GM12878 (cell line): ENCODE measurements at regions of chr7 and their contacts with region 1.

Region 1: DNA sequence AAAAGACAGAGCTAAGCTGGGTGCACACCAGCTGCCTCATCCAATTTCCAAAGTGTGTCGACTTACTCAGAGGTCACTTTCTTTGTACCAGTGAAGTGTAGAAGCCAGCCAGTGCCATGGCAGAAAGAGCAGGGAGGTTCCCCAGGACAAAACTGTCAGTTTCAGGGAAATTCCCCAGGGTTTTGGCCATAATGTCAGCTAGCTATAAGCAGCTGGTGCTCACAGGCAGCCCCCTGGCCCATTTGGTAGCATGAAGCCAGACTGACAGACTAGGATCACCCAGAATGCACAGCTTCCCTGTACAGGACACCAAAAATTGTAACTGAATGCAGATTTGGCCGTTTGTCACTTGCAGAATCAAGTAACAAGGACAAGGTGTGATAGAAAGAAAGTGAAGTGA is 28.6 kb downstream of the MRPL32 start:
- DNase-seq: no peak
- ATAC-seq: peak; percentile 90
- H3K4me3 ChIP-seq: no peak overlapping the region
- H3K27ac ChIP-seq: no peak overlapping the region
- H3K4me1 ChIP-seq: no peaks in the 10 kb centered on the region
- H3K27me3 ChIP-seq: no peaks in the 10 kb centered on the region
- CTCF ChIP-seq: no peak
- EP300 ChIP-seq: no peak
- POLR2A ChIP-seq: no peak
- RAD21 ChIP-seq: no peak

Region 2: DNA sequence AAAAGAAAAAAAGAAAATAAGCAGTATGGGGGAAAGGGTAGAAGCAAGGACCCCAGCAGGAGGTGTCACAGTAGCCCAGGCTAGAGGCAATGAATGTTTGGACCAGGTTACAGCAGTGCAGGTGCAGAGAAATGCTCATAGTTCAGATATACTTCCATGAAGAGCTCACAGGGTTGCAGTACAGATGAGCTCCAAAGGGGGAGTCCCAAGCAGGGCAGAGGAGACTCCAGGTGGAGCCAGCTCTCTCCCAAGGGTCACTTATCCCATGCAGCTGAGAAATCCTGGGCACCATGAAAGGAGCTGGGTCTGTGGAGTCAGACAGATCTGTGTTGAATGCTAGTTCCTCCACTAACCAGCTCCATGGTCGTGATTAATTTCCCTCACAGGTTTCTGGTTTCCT is 223.8 kb before region 1 on chr7:
- CTCF ChIA-PET with region 1: no interaction called
- POLR2A ChIA-PET with region 1: no interaction called
- RAD21 ChIA-PET with region 1: no interaction called
- SMC1A ChIA-PET with region 1: no interaction called
- in situ Hi-C with region 1: no loop called
- intact Hi-C with region 1: no loop called
- DNase-seq: no peak
- ATAC-seq: no peak
- H3K4me3 ChIP-seq: no peak overlapping the region
- H3K27ac ChIP-seq: no peak overlapping the region
- H3K4me1 ChIP-seq: no peaks in the 10 kb centered on the region
- H3K27me3 ChIP-seq: no peaks in the 10 kb centered on the region
- CTCF ChIP-seq: no peak
- EP300 ChIP-seq: no peak
- POLR2A ChIP-seq: no peak
- RAD21 ChIP-seq: no peak

Region 3: DNA sequence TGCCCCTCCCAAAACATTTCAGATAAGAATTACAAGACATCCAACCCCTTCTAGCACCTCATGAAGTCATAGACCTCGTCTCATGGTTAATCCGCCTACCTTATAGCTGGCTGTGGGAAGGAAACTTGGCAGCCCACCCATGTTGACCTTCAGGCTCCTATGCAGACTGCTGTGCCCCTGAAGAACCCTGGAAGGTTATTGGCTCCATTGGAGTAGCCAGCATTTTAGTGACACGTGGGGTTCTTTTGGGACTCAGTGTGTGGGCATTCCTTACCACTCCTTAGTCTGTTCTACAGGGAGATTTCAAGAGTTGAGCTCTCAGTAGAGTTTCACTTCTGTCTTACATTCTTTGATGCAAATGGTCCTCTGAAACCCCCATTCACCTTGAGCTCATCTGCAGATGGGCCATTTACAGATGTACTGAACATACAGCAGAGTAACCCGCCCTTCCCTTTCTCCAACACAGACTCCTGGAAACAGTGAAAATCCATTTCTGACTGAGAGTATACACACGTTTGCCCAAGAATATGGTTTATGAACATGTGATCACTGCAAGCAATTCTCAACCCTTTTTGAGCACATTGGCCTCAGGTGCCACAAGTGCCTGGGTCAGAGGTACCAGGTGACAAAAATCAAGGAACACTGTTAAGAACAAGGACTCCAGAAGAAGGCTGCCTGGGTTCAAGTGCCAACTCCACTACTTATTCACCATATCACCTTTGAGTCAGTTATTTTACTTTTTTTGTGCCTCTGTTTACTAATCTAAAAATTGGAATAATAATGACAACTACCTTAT is 97.7 kb after region 1 on chr7:
- CTCF ChIA-PET with region 1: interaction called, 4 read pairs
- POLR2A ChIA-PET with region 1: no interaction called
- RAD21 ChIA-PET with region 1: interaction called, 15 read pairs
- SMC1A ChIA-PET with region 1: interaction called, 23 read pairs
- in situ Hi-C with region 1: no loop called
- intact Hi-C with region 1: no loop called
- DNase-seq: peak; percentile 53
- ATAC-seq: peak; percentile 61
- H3K4me3 ChIP-seq: no peak overlapping the region
- H3K27ac ChIP-seq: no peak overlapping the region
- H3K4me1 ChIP-seq: peaks cover 17% of the 10 kb centered on the region
- H3K27me3 ChIP-seq: no peaks in the 10 kb centered on the region
- CTCF ChIP-seq: no peak
- EP300 ChIP-seq: no peak
- POLR2A ChIP-seq: no peak
- RAD21 ChIP-seq: no peak